ENCODE measurements at regions of chr10 and their contacts with region 1.

Region 1: DNA sequence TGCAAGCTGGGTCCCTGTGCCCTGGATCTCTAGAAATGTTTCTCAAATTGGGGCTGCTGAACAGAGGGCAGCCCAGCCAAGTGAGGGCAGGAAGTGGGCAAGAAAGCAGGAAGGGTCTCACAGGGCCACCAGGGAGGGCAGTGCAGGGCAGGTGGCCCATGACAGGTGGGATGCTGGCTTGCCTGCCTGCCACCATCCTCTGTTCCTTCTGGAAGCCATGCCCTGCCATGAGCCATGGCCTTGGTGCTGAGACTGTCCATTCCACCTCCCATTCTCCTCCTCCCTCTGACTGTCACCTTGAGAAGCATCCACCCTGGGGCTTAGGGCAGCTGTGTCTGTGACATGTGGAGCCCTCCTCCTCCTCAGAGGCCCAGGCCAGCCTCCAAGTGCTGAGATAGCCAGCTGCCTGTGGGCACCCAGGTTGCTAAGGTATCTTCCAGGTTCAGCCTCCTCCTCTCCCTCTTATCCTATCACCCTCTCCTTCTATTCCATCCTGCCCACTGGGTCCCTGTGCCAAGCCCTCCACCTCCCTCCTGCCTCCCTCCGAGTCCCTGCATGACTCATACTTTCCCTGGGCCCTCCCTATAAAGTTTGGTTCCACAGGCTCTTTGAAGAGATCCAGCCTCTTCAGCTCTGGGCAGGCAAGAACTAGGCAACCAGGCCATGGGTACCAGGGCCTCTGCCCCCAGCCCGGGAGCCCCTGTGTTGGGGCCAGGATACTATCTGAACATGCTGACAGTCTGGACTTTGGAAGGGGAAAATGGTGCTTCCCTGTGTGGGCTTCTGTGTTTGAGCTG is 1.3 kb downstream of the VSIR start:
- DNase-seq: peak; percentile 57
- H3K4me3 Mint-ChIP-seq: peak overlapping the region; percentile 93
- H3K27ac Mint-ChIP-seq: peak overlapping the region; percentile 92
- H3K4me1 Mint-ChIP-seq: peaks cover 83% of the 10 kb centered on the region
- H3K27me3 Mint-ChIP-seq: no peaks in the 10 kb centered on the region

Region 2: DNA sequence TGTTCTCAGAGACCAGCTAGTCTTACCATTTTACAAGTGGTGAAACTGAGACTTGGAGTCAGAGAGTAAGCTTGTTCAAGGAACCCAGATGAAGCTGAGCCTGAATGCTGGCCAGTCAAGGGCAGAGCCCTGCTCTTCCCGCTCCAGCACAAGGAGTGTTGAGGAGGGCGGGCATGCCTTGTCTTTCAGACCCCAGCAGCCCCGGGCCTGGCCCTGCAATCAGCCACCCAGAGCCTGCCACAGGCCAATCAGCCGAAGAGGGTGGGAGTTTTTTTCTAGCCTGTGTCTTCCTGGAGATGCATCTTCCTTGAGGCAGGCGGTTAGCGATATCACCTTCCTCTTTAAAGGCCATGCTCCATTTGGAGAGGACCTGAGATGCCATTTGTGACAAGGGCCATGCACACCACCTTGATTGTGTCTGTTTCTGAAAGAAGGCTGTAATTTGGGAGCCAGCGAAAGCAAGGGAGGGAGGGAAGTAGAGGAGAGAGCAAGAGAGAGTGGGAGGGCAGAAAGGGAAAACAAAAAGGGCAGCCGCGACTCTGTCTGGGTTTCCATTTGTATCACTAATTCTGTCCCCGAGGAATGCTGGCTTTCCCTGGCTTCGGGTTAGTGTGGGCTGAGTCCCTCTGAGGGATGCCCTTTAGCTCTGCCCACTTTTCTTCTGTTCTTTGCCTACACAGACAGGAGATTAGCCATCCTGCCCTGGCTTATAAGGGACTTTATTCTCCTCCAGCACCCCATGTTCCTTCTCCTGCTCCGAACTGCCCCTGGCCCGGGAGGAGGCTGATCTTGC is 367.3 kb before region 1 on chr10:
- CTCF ChIA-PET with region 1: no interaction called
- DNase-seq: no peak
- H3K4me3 Mint-ChIP-seq: no peak overlapping the region
- H3K27ac Mint-ChIP-seq: no peak overlapping the region
- H3K4me1 Mint-ChIP-seq: no peaks in the 10 kb centered on the region
- H3K27me3 Mint-ChIP-seq: peaks cover 41% of the 10 kb centered on the region

Region 3: GRCh38 chr10:71561003-71561574 is 210.9 kb before region 1 on chr10:
- CTCF ChIA-PET with region 1: no interaction called
- DNase-seq: no peak
- H3K4me3 Mint-ChIP-seq: no peak overlapping the region
- H3K27ac Mint-ChIP-seq: no peak overlapping the region
- H3K4me1 Mint-ChIP-seq: no peaks in the 10 kb centered on the region
- H3K27me3 Mint-ChIP-seq: peaks cover 52% of the 10 kb centered on the region

Region 4: DNA sequence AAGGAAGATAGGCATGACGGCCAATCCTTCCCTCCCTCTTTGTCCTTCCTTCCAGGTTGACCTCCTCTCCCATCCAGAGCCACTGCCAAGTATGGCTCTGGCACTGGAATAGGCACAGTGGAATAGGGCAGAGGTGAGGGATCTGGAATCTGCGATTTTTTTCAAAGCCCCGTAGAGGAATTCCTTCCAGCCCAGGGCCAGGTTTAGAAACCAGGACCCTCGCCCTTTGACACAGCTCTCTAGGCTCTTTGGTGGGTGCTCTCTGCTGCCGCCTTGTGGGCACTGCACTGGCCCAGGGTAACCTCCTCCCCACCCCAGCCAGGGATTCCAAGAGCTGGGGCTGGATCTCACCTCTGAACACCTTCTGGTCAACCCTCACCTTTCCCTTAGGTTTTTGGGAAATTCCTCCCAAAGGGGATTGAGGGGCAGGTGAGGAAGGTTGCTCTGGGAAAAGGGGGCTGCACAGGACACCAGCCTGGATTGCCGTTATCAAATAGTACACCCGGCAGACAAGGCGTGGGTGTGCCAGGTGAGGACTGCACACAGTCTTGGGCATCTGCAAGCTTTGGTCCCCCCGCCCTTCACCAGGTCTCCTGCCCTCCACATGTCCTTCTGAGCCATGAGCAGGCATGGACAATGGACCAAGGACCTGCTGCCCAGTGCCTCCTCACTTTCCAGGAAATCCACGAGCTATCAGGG is 75.2 kb before region 1 on chr10:
- CTCF ChIA-PET with region 1: interaction called, 50 read pairs
- DNase-seq: peak; percentile 75
- H3K4me3 Mint-ChIP-seq: no peak overlapping the region
- H3K27ac Mint-ChIP-seq: no peak overlapping the region
- H3K4me1 Mint-ChIP-seq: peaks cover 56% of the 10 kb centered on the region
- H3K27me3 Mint-ChIP-seq: peaks cover 27% of the 10 kb centered on the region

Region 5: GRCh38 chr10:71713135-71714030 is 58.6 kb before region 1 on chr10:
- CTCF ChIA-PET with region 1: interaction called, 38 read pairs
- DNase-seq: peak; percentile 45
- H3K4me3 Mint-ChIP-seq: peak overlapping the region; percentile 65
- H3K27ac Mint-ChIP-seq: peak overlapping the region; percentile 94
- H3K4me1 Mint-ChIP-seq: peaks cover 73% of the 10 kb centered on the region
- H3K27me3 Mint-ChIP-seq: no peaks in the 10 kb centered on the region

Region 6: DNA sequence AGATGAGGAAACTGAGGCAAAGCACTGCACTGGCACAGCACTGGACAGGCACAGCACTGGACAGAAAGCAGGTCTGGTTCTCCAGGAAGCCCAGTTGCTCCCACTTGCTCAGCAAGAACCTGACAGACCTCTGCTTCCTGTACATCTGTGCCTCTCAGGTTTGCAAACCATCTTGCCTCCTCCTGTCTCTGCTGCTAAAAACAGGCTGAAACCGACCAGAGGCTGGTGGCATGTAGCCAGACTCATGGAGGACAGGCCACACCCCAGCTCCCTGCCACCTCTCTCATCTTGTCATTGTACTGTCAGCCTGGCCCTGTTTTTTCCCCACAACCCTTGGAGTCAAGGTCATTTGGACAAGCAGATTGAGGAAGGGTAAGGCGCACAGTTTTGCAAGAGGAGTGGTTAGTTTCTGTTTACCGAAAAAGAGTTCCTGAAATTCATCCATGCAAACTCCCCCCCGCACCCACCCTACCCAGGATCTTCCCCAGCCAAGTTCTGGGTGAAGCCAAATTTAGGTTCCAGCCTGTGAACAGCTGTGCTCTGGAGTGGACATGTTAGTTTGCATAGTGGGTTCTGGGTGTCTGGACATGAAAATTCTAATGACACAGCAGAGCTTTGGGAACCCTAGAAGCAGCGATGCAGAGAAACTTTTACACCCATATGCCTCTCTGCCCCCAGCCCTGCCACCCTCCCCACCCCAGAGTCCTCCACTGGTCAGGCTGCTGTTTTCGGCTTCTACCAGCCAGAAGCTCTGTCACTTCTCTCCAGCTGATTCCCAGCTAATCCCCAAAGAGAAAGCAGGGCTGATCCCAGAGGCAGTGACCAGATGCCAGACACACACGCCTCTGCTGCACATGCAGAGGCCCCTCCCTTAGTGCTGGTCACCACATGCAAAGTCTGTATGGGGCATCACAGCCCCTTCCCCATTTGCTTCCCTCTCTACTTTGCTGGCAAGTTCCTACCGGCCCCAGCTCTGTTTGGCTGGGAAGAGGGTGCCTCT is 44.0 kb before region 1 on chr10:
- CTCF ChIA-PET with region 1: interaction called, 74 read pairs
- DNase-seq: peak; percentile 78
- H3K4me3 Mint-ChIP-seq: peak overlapping the region; percentile 36
- H3K27ac Mint-ChIP-seq: peak overlapping the region; percentile 99
- H3K4me1 Mint-ChIP-seq: peaks cover 89% of the 10 kb centered on the region
- H3K27me3 Mint-ChIP-seq: no peaks in the 10 kb centered on the region

Region 7: GRCh38 chr10:71748671-71749191 is 23.3 kb before region 1 on chr10:
- CTCF ChIA-PET with region 1: interaction called, 36 read pairs
- DNase-seq: peak; percentile 93
- H3K4me3 Mint-ChIP-seq: peak overlapping the region; percentile 49
- H3K27ac Mint-ChIP-seq: peak overlapping the region; percentile 96
- H3K4me1 Mint-ChIP-seq: peaks cover 98% of the 10 kb centered on the region
- H3K27me3 Mint-ChIP-seq: no peaks in the 10 kb centered on the region

Region 8: DNA sequence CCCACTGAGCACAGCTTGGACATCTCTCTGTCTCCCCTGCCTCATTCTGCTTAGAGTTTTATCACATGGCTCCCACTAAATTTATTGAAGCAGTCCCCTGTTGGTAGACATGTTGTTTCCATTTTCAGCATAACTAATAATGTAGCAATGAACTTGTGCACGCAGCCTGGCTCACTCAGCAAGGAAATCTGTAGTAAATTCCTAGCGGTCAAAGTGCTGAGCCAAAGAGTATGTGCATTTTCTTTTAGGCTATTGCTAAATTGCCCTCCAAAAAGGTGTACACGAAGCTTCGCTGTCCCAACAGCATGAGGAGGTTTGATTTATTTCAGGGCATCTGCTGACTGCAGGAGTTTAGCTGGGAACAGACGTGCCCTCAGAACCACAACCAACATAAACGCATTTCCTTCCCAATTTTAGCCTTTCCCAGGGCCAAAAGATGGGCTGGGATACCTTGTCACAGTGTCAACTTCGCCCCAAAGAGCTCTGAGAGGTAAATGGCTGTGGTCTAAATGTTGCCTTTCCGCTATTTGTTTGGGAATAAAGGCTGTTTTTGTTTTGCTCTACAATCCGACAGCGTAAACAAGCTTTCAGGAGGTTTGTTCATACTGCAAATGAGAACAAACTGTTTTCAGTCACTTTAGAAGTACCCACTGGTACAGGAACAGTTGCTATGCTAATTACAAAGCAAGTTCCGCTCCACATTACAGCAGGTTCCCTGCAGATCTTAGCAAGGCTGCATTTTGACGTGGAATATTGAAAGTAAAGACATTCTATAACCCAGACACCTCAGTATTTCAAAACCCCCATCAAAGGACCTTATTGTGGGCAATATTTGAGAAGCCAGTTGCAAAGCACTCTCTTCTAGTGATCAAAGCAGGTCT is 15.5 kb before region 1 on chr10:
- CTCF ChIA-PET with region 1: interaction called, 41 read pairs
- DNase-seq: no peak
- H3K4me3 Mint-ChIP-seq: peak overlapping the region; percentile 61
- H3K27ac Mint-ChIP-seq: peak overlapping the region; percentile 97
- H3K4me1 Mint-ChIP-seq: peaks cover 94% of the 10 kb centered on the region
- H3K27me3 Mint-ChIP-seq: no peaks in the 10 kb centered on the region

Region 9: DNA sequence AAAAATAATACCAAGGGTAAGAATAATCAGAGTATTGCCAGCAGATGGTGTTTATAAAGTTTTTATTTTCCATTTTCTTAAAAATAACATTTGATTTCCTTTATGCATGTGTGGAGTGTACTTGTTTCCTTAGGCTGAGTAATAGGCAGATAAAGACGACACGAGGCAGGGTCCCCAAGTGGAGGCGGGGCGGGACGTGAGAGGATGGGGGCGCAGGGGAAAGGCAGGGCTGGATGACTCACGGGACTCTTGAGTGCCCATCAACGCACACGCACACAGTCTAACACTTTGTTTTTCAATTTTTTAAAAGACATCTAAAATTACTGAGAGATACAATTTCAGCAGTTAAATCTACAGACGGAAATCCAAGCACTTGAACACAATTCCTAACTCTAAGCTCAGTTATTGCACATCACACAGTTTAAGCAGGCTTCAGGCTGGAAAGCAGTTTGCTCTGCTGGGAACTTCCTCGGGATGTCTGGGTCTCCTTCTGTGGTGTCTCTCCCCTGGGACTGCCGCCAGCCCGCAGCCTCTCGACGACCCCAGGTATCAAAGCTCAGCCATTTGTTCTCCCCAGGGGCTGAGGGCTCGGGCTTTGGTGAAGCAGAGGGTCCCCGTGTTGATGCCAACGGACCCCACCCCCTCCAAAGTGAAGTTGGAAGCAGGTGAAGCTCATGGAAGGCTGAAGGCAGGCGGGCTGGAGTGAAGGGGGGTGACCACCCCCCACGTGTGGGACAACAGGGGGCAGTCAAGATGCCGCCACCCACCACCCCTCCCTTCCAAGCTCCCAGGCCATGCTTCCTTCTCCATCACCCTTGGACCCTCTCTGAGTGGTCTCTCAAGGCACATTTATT is 287.2 kb after region 1 on chr10:
- CTCF ChIA-PET with region 1: no interaction called
- DNase-seq: no peak
- H3K4me3 Mint-ChIP-seq: no peak overlapping the region
- H3K27ac Mint-ChIP-seq: peak overlapping the region; percentile 78
- H3K4me1 Mint-ChIP-seq: peaks cover 4% of the 10 kb centered on the region
- H3K27me3 Mint-ChIP-seq: peaks cover 16% of the 10 kb centered on the region